A549 (cell line): ENCODE measurements at regions of chr17 and their contacts with region 1.

Region 1: DNA sequence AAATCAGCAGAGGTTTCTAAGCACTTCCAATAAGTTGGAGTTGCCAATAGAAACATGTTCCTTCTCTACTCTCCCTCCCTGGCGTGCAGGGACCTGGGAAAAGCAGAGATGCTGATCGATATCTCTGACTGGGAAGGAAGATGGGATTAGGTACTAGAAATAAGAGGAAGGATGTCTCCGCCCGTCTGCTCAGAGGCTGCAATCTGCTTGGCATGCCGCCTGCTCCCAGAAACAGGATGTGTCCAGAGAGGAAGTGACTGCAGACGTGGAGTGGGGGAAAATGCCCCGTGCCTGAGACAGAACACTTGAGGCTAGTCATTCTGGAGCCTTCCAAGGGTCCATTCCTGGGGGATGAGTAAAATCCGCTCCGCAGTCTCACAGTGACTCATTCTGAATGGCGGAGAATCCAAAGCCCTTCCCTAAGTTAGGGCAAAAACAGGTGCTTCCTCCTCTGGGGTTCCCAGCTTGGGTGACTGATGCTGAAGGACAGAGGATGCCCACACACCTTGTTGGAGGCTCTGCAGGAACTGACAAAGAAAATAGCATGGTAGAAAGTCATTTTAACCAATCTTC is 45.0 kb upstream of the SMURF2 start:
- DNase-seq: peak; percentile 97 to 98
- ATAC-seq: peak; percentile 94 to 96
- H3K4me3 ChIP-seq: no peak overlapping the region
- H3K27ac ChIP-seq: peak overlapping the region; percentile 79 to 86
- H3K4me1 ChIP-seq: peaks cover 49% of the 10 kb centered on the region
- CTCF ChIP-seq: no peak
- EP300 ChIP-seq: peak; percentile 81 to 82; a peak in 3 of 5 replicates
- POLR2A ChIP-seq: no peak
- RAD21 ChIP-seq: peak; percentile 36 to 52; a peak in 4 of 5 replicates

Region 2: DNA sequence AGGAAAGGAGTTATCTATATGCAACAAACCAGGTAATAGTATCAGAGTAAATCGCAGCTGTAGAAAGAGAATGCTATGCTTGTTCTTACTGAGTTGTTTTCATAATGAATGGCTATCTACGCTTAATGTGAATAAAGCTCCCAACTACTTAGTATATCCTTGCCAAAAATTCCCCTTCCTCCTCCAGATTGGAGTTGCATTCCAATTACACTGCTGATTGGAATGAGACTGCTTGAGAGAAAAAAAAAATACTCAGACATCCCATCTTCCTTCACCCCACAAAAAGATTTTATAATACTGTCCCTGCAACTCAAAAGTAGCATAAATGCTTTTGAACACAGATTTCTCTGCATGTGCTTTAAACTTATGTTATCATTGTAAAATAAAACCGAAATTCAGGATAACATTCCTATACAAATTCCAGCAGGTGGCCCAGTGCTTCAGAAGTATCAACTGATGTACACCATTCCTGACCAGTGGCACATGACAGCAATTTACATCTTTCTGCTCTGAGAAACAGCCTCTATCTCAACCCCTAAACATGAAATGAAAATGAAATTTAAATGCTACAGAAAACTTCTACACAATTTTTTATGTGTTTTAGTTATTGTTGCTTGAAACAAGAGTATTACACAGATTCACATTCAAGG is 92.0 kb before region 1 on chr17:
- CTCF ChIA-PET with region 1: no interaction called
- POLR2A ChIA-PET with region 1: no interaction called
- DNase-seq: no peak
- ATAC-seq: no peak
- H3K4me3 ChIP-seq: no peak overlapping the region
- H3K27ac ChIP-seq: no peak overlapping the region
- H3K4me1 ChIP-seq: peaks cover 28% of the 10 kb centered on the region
- CTCF ChIP-seq: no peak
- EP300 ChIP-seq: no peak
- POLR2A ChIP-seq: no peak
- RAD21 ChIP-seq: no peak

Region 3: GRCh38 chr17:64679688-64680216 is 27.4 kb before region 1 on chr17:
- CTCF ChIA-PET with region 1: interaction called, 17 read pairs
- POLR2A ChIA-PET with region 1: interaction called, 17 read pairs
- DNase-seq: peak; percentile 95
- ATAC-seq: peak; percentile 93 to 99
- H3K4me3 ChIP-seq: peak overlapping the region; percentile 7; the same call in 2 of the 3 replicates
- H3K27ac ChIP-seq: peak overlapping the region; percentile 84 to 86
- H3K4me1 ChIP-seq: peaks cover 56% of the 10 kb centered on the region
- CTCF ChIP-seq: no peak; the same call in 2 of the 3 replicates
- EP300 ChIP-seq: peak; percentile 86 to 91
- POLR2A ChIP-seq: no peak
- RAD21 ChIP-seq: peak; percentile 41 to 59; a peak in 4 of 5 replicates

Region 4: DNA sequence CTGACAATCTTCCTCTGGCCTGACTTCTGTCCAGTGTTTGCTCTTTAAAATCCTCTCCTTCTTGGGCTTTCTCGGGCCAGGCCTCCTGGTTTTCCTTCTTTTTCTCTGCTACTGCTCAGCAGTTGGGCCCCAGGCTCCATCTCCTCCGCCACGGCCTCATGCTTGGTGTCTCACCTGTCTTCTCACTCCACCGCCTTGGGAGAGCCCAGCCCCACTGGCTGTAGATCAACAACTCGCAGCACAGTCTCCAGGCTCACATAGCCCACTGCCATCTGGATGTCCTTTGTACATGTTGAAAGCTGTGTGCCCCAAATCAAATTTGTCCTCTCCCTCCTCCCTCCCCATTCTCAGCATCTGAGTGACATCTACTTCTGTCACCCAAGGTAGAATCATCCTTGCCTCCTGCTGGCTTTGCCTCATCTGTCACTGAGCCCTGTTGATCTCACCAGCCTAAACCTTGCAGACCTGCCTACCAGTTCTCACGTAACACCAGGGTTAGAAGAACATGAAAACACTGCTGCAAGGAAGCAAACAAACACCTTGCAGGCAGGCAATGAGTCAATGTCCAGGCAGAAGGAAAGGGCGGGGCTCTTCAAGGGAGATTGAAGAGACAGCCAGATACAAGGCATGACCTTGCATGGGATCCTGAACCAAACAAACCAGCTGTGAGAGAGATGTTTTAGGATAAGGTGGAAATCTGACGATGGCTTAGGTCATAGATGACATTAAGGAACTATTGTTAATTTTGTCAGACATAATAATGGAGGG is 58.3 kb after region 1 on chr17:
- CTCF ChIA-PET with region 1: no interaction called
- POLR2A ChIA-PET with region 1: no interaction called
- DNase-seq: peak in 1 of 2 experiments; percentile 48
- ATAC-seq: peak; percentile 42 to 68; a peak in 4 of 6 replicates
- H3K4me3 ChIP-seq: no peak overlapping the region
- H3K27ac ChIP-seq: no peak overlapping the region
- H3K4me1 ChIP-seq: peaks cover 12% of the 10 kb centered on the region
- CTCF ChIP-seq: no peak
- EP300 ChIP-seq: no peak
- POLR2A ChIP-seq: no peak
- RAD21 ChIP-seq: no peak